ENCODE measurements at regions of chr6 and their contacts with region 1.

Region 1: DNA sequence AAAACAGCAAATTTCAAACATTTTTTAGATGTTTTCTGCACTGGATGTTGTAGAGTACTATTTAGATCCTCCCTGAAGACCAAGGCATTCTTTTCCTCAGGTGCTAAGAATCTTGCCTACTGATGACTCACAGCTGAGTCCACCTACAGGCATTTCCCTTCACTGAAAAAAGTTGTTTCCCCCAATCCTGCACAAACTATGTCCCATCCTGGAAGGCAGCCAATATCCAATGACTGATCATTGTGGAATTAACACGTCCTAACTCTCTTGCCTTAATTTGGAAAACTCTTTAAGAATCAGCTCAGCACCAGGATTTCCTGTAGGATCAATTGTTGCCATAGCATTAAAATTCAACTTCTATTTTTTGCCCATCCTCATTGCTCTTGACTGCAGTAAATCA is 268.4 kb upstream of the IRAK1BP1 start:
- DNase-seq: peak; percentile 100
- H3K4me3 ChIP-seq: no peak overlapping the region
- H3K27ac ChIP-seq: peak overlapping the region; percentile 100
- H3K4me1 ChIP-seq: peaks cover 81% of the 10 kb centered on the region
- H3K27me3 ChIP-seq: no peaks in the 10 kb centered on the region
- CTCF ChIP-seq: no peak
- POLR2A ChIP-seq: peak; percentile 71

Region 2: DNA sequence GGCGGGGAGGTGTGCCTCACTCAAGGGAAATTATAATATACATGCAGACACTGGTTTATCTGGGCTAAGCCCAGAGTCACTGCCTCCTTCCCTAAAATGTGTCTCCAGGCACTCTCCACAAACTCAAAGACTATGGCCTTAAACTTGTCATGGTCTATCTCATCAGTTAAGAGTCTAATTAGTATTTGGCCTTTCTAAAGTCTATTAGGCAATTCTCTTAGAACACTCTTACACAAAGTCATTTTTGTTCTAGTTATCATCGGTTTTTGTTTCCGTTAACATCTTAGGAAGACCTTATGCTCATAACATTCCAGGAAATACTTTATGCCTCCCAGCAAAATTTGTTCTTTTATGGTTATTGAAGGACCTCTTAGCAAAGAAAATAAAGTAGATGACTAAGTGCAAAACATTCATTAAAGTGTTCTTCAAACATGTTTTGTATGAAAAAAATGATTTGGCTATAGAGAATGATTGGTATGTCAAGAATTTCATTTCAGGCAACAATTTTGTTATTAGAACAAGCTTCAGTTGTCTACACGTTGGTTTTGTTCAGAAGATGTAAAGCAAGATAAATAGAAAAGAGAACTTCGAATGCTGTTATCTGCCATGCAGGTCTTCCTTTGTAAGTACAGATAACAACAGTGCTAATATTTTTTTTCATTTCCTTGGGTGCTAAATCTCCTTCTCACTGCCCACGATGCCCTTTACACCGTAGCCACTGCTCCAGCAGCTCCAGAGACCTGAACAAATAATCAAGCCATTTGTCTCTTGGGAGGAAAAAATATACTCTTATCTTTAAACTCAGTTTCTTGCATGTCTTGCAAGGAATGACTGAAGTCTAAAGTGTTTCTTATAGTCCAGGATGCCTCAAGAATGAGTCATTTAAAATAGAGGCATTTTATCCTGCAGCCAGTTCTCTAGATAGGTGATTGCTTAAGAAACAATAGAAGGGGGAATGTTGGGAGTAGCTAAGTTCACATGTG is 1306.1 kb before region 1 on chr6:
- CTCF ChIA-PET with region 1: no interaction called
- POLR2A ChIA-PET with region 1: interaction called, 3 read pairs
- dilution Hi-C with region 1: no loop called
- intact Hi-C with region 1: loop called (anchors 2 kb)
- DNase-seq: peak; percentile 97
- H3K4me3 ChIP-seq: no peak overlapping the region
- H3K27ac ChIP-seq: peak overlapping the region; percentile 90
- H3K4me1 ChIP-seq: peaks cover 61% of the 10 kb centered on the region
- H3K27me3 ChIP-seq: no peaks in the 10 kb centered on the region
- CTCF ChIP-seq: no peak
- POLR2A ChIP-seq: no peak

Region 3: GRCh38 chr6:78243519-78243918 is 355.4 kb before region 1 on chr6:
- CTCF ChIA-PET with region 1: no interaction called
- POLR2A ChIA-PET with region 1: no interaction called
- dilution Hi-C with region 1: no loop called
- intact Hi-C with region 1: loop called (anchors 5 kb)
- DNase-seq: peak; percentile 53
- H3K4me3 ChIP-seq: no peak overlapping the region
- H3K27ac ChIP-seq: no peak overlapping the region
- H3K4me1 ChIP-seq: no peaks in the 10 kb centered on the region
- H3K27me3 ChIP-seq: no peaks in the 10 kb centered on the region
- CTCF ChIP-seq: no peak
- POLR2A ChIP-seq: no peak

Region 4: GRCh38 chr6:78487401-78487800 is 111.6 kb before region 1 on chr6:
- CTCF ChIA-PET with region 1: interaction called, 3 read pairs
- POLR2A ChIA-PET with region 1: no interaction called
- dilution Hi-C with region 1: no loop called
- intact Hi-C with region 1: loop called (anchors 1 kb)
- DNase-seq: peak; percentile 59
- H3K4me3 ChIP-seq: no peak overlapping the region
- H3K27ac ChIP-seq: no peak overlapping the region
- H3K4me1 ChIP-seq: peaks cover 50% of the 10 kb centered on the region
- H3K27me3 ChIP-seq: no peaks in the 10 kb centered on the region
- CTCF ChIP-seq: no peak
- POLR2A ChIP-seq: no peak

Region 5: GRCh38 chr6:78561015-78561414 is 38.0 kb before region 1 on chr6:
- CTCF ChIA-PET with region 1: interaction called, 7 read pairs
- POLR2A ChIA-PET with region 1: interaction called, 3 read pairs
- dilution Hi-C with region 1: no loop called
- intact Hi-C with region 1: loop called (anchors 1 kb)
- DNase-seq: peak; percentile 49
- H3K4me3 ChIP-seq: no peak overlapping the region
- H3K27ac ChIP-seq: peak overlapping the region; percentile 18
- H3K4me1 ChIP-seq: peaks cover 38% of the 10 kb centered on the region
- H3K27me3 ChIP-seq: no peaks in the 10 kb centered on the region
- CTCF ChIP-seq: no peak
- POLR2A ChIP-seq: no peak

Region 6: GRCh38 chr6:78611958-78612357 is 13.0 kb after region 1 on chr6:
- CTCF ChIA-PET with region 1: interaction called, 11 read pairs
- POLR2A ChIA-PET with region 1: interaction called, 3 read pairs
- dilution Hi-C with region 1: no loop called
- intact Hi-C with region 1: loop called (anchors 1 kb)
- DNase-seq: peak; percentile 40
- H3K4me3 ChIP-seq: no peak overlapping the region
- H3K27ac ChIP-seq: no peak overlapping the region
- H3K4me1 ChIP-seq: peaks cover 20% of the 10 kb centered on the region
- H3K27me3 ChIP-seq: no peaks in the 10 kb centered on the region
- CTCF ChIP-seq: peak; percentile 31 to 36
- POLR2A ChIP-seq: no peak

Region 7: DNA sequence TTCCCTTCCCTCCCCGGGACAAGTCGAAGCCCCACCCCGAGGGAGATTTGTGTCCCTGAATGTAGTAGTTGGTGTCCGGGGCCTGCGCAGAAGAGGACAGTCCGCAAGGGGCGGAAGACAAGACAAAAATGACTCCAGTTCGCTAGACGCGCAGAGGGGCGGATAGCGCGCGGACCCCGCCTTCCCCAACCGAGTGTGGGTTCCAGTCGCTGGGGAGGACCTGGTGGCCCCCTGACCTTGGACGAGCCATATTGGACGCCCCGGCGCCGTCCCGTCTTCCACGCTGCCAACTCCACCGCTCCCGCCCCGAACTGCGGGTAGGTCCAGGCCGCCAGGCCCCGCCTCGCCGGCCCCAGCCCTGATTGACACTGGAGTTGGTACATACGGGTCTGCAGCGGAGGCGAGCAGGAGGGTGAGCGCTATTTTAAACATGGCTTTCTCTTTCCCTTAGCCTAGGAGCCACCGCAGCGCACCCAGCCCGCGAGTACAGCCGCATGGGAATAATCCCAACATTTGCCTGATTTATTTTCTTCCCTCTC is 634.7 kb after region 1 on chr6:
- CTCF ChIA-PET with region 1: no interaction called
- POLR2A ChIA-PET with region 1: no interaction called
- dilution Hi-C with region 1: no loop called
- intact Hi-C with region 1: no loop called
- DNase-seq: peak; percentile 91
- H3K4me3 ChIP-seq: peak overlapping the region; percentile 57 to 100 (median 98)
- H3K27ac ChIP-seq: peak overlapping the region; percentile 75
- H3K4me1 ChIP-seq: peaks cover 20% of the 10 kb centered on the region
- H3K27me3 ChIP-seq: no peaks in the 10 kb centered on the region
- CTCF ChIP-seq: peak in 1 of 2 donors; percentile 26
- POLR2A ChIP-seq: peak; percentile 89

Region 8: GRCh38 chr6:79544939-79545450 is 946.0 kb after region 1 on chr6:
- CTCF ChIA-PET with region 1: no interaction called
- POLR2A ChIA-PET with region 1: no interaction called
- dilution Hi-C with region 1: no loop called
- intact Hi-C with region 1: loop called (anchors 1 kb)
- DNase-seq: peak; percentile 99
- H3K4me3 ChIP-seq: no peak overlapping the region
- H3K27ac ChIP-seq: peak overlapping the region; percentile 86
- H3K4me1 ChIP-seq: peaks cover 24% of the 10 kb centered on the region
- H3K27me3 ChIP-seq: no peaks in the 10 kb centered on the region
- CTCF ChIP-seq: peak; percentile 60 to 62
- POLR2A ChIP-seq: peak; percentile 28